ENCODE measurements at regions of chr1 and their contacts with region 1.

Region 1: GRCh38 chr1:43227143-43227764 is 42.5 kb upstream of the TMEM125 start:
- DNase-seq: peak; percentile 76 to 90
- ATAC-seq: peak; percentile 81 to 97 (median 91)
- H3K4me3 ChIP-seq: no peak overlapping the region
- H3K4me3 Mint-ChIP-seq: no peak overlapping the region
- H3K27ac ChIP-seq: no peak overlapping the region
- H3K27ac Mint-ChIP-seq: no peak overlapping the region
- H3K4me1 ChIP-seq: peaks cover 2% of the 10 kb centered on the region
- H3K4me1 Mint-ChIP-seq: peaks cover 5 to 7% of the 10 kb centered on the region in 2 donors
- H3K27me3 ChIP-seq: no peaks in the 10 kb centered on the region
- H3K27me3 Mint-ChIP-seq: peaks cover 7 to 9% of the 10 kb centered on the region in 2 donors
- CTCF ChIP-seq: peak; percentile 95

Region 2: GRCh38 chr1:43358746-43359693 is 131.8 kb after region 1 on chr1 and contains the start of gene CDC20:
- intact Hi-C with region 1: loop called (anchors 2 kb)
- DNase-seq: peak; percentile 95 to 96
- ATAC-seq: peak; percentile 98 to 99 (median 98)
- H3K4me3 ChIP-seq: peak within 1 kb of the TSS; percentile 62
- H3K4me3 Mint-ChIP-seq: peak within 1 kb of the TSS; percentile 92
- H3K27ac ChIP-seq: peak within 1 kb of the TSS; percentile 53
- H3K27ac Mint-ChIP-seq: peak within 1 kb of the TSS; percentile 62 to 81
- H3K4me1 ChIP-seq: peaks cover 24% of the 10 kb centered on the region
- H3K4me1 Mint-ChIP-seq: peaks cover 10 to 33% of the 10 kb centered on the region in 2 donors
- H3K27me3 ChIP-seq: no peaks in the 10 kb centered on the region
- H3K27me3 Mint-ChIP-seq: no peaks in the 10 kb centered on the region
- CTCF ChIP-seq: no peak
- total RNA-seq, gene CDC20: 0.50 to 2.4 (median 0.96) TPM

Region 3: DNA sequence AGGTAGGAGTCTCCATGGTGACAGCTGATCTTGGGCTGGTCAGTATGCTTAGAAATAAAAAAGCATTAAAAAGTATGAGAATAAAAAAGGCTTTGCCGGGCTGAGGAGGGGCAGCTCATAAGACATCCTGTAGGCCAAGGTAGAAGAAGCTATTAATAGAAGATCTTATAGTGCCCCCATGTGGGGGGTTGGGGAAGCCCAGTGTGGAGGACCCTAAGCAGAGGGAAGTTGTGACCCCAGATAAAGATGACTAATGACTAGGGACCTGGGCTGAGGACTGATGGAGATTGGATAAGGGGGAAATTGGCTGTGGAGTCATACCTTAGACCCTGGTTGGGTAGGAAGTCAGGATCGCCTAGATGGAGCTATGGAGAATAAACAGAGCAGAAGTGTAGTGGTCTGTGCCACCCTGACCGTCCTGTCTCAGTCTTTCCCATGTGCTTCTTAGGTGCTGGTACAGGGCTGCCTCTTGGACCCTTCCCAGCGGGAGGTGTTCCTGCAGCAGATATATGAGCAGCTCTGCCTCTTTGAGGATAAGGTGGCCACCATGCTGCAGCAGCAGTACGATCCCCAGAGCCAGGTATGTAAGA is 187.5 kb after region 1 on chr1:
- intact Hi-C with region 1: loop called (anchors 1 kb)
- DNase-seq: peak; percentile 40 to 80
- ATAC-seq: peak; percentile 83 to 92 (median 85)
- H3K4me3 ChIP-seq: no peak overlapping the region
- H3K4me3 Mint-ChIP-seq: no peak overlapping the region
- H3K27ac ChIP-seq: no peak overlapping the region
- H3K27ac Mint-ChIP-seq: peak overlapping the region in 1 of 2 donors; percentile 68
- H3K4me1 ChIP-seq: no peaks in the 10 kb centered on the region
- H3K4me1 Mint-ChIP-seq: peaks cover 5% of the 10 kb centered on the region in 2 donors
- H3K27me3 ChIP-seq: no peaks in the 10 kb centered on the region
- H3K27me3 Mint-ChIP-seq: no peaks in the 10 kb centered on the region
- CTCF ChIP-seq: peak; percentile 65